ENCODE measurements at regions of chr9 and their contacts with region 1.

Region 1: GRCh38 chr9:4792572-4793458 is at the start of gene RCL1:
- DNase-seq: peak; percentile 93 to 98 (median 96)
- ATAC-seq: peak; percentile 92 to 93
- H3K4me3 Mint-ChIP-seq: peak within 1 kb of the TSS; percentile 94 to 98 (median 96)
- H3K27ac Mint-ChIP-seq: peak within 1 kb of the TSS; percentile 87 to 98 (median 96)
- H3K4me1 Mint-ChIP-seq: peaks cover 23 to 52% (median 43%) of the 10 kb centered on the region in 4 donors
- H3K27me3 Mint-ChIP-seq: peaks cover 0 to 1% (median 0%) of the 10 kb centered on the region in 5 donors
- polyA plus RNA-seq, gene RCL1: 18.7 to 22.2 (median 20.2) TPM

Region 2: GRCh38 chr9:4713849-4714248 is 79.0 kb before region 1 on chr9:
- POLR2A ChIA-PET with region 1: no interaction called
- DNase-seq: no peak
- ATAC-seq: no peak
- H3K4me3 Mint-ChIP-seq: no peak overlapping the region
- H3K27ac Mint-ChIP-seq: peak overlapping the region in 5 of 10 donors; percentile 8 to 75 (median 56)
- H3K4me1 Mint-ChIP-seq: peaks cover 0 to 5% (median 0%) of the 10 kb centered on the region in 4 donors
- H3K27me3 Mint-ChIP-seq: no peaks in the 10 kb centered on the region

Region 3: GRCh38 chr9:4984621-4985385 is 192.0 kb after region 1 on chr9 and contains the start of gene JAK2:
- POLR2A ChIA-PET with region 1: interaction called, 20 read pairs
- DNase-seq: peak; percentile 60 to 88 (median 74)
- ATAC-seq: peak; percentile 75 to 83
- H3K4me3 Mint-ChIP-seq: peak within 1 kb of the TSS; percentile 88 to 98 (median 94)
- H3K27ac Mint-ChIP-seq: peak within 1 kb of the TSS; percentile 65 to 96 (median 92)
- H3K4me1 Mint-ChIP-seq: peaks cover 15 to 32% (median 26%) of the 10 kb centered on the region in 4 donors
- H3K27me3 Mint-ChIP-seq: no peaks in the 10 kb centered on the region
- polyA plus RNA-seq, gene JAK2: 1.9 to 4.8 (median 3.8) TPM

Measured in naive thymus-derived CD8-positive, alpha-beta T cell (primary cell).